ENCODE measurements at regions of chrX and their contacts with region 1.

Region 1: DNA sequence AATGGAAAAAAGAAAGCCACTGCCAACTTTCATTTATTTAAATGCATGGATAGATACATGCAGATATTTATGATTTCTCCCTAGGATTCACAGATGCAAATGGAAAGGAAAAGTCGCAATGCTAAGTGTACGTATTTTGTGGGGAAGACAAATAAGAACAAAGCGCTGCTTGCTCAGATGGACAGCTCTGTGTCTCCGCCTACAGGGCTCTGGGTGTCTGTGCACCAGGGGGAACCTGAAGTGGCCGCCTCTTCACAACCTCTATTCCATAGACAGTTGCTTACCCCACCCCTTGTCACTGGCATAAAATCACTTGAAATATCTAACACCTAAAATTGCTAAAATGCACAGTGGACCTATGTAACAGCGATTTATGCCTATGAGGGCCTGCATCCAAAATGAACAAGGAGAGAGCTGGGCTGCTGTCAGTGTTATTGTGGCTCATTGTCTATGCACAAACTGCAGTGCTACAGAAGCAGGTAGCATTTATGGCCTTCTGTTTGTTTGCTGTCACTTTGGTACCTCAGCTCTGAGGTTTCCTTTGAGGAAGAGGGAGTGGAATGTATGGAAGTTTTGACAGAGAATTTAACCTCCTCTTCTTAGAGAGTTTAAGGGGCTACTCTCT is 58.6 kb upstream of the PAGE1 start:
- DNase-seq: peak; percentile 4 to 67 (median 45)
- ATAC-seq: peak; percentile 81
- H3K4me3 ChIP-seq: no peak overlapping the region
- H3K4me3 Mint-ChIP-seq: peak overlapping the region; percentile 11
- H3K27ac ChIP-seq: no peak overlapping the region
- H3K27ac Mint-ChIP-seq: no peak overlapping the region
- H3K4me1 ChIP-seq: no peaks in the 10 kb centered on the region
- H3K4me1 Mint-ChIP-seq: peaks cover 2% of the 10 kb centered on the region
- H3K27me3 ChIP-seq: no peaks in the 10 kb centered on the region
- H3K27me3 Mint-ChIP-seq: peaks cover 6% of the 10 kb centered on the region
- CTCF ChIP-seq: peak; percentile 60

Region 2: GRCh38 chrX:48972220-48973167 is 781.9 kb before region 1 on chrX:
- CTCF ChIA-PET with region 1: no interaction called
- POLR2A ChIA-PET with region 1: no interaction called
- intact Hi-C with region 1: loop called in 1 of 2 experiments (anchors 10 kb)
- DNase-seq: peak in 5 of 9 experiments; percentile 25 to 56 (median 37)
- ATAC-seq: peak; percentile 46
- H3K4me3 ChIP-seq: peak overlapping the region in 1 of 2 experiments; percentile 22
- H3K4me3 Mint-ChIP-seq: peak overlapping the region; percentile 61
- H3K27ac ChIP-seq: no peak overlapping the region
- H3K27ac Mint-ChIP-seq: no peak overlapping the region
- H3K4me1 ChIP-seq: peaks cover 11% of the 10 kb centered on the region
- H3K4me1 Mint-ChIP-seq: peaks cover 15% of the 10 kb centered on the region
- H3K27me3 ChIP-seq: no peaks in the 10 kb centered on the region
- H3K27me3 Mint-ChIP-seq: no peaks in the 10 kb centered on the region
- CTCF ChIP-seq: no peak

Region 3: DNA sequence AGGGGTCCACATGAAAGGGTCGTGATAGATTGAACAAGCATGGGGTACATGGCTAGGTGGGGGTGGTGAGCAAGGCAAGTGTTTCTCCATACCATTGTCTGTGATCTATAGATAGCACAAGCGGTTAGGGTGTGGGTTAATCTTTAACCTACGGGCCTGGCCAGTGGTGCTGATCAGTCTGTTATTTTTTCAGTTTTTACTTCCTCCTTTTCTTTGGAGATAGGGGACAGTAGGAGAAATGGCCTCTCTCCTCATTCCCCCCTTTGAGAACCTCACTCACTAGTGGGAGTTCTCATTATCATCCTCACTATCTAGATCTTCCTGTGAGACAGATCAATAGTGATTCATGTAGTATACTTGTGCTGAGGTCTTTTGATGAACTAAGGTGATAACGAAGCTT is 614.6 kb before region 1 on chrX:
- CTCF ChIA-PET with region 1: interaction called, 3 read pairs
- POLR2A ChIA-PET with region 1: no interaction called
- intact Hi-C with region 1: loop called in 1 of 2 experiments (anchors 10 kb)
- DNase-seq: no peak
- ATAC-seq: no peak
- H3K4me3 ChIP-seq: no peak overlapping the region
- H3K4me3 Mint-ChIP-seq: no peak overlapping the region
- H3K27ac ChIP-seq: no peak overlapping the region
- H3K27ac Mint-ChIP-seq: no peak overlapping the region
- H3K4me1 ChIP-seq: no peaks in the 10 kb centered on the region
- H3K4me1 Mint-ChIP-seq: no peaks in the 10 kb centered on the region
- H3K27me3 ChIP-seq: no peaks in the 10 kb centered on the region
- H3K27me3 Mint-ChIP-seq: no peaks in the 10 kb centered on the region
- CTCF ChIP-seq: no peak

Region 4: GRCh38 chrX:49291615-49292337 is 462.6 kb before region 1 on chrX:
- CTCF ChIA-PET with region 1: interaction called, 3 read pairs
- POLR2A ChIA-PET with region 1: no interaction called
- intact Hi-C with region 1: loop called (anchors 1 to 2 kb)
- DNase-seq: peak; percentile 27 to 75 (median 68)
- ATAC-seq: peak; percentile 87
- H3K4me3 ChIP-seq: no peak overlapping the region
- H3K4me3 Mint-ChIP-seq: no peak overlapping the region
- H3K27ac ChIP-seq: no peak overlapping the region
- H3K27ac Mint-ChIP-seq: no peak overlapping the region
- H3K4me1 ChIP-seq: peaks cover 34% of the 10 kb centered on the region
- H3K4me1 Mint-ChIP-seq: peaks cover 27% of the 10 kb centered on the region
- H3K27me3 ChIP-seq: no peaks in the 10 kb centered on the region
- H3K27me3 Mint-ChIP-seq: no peaks in the 10 kb centered on the region
- CTCF ChIP-seq: peak; percentile 37